ENCODE measurements at regions of chr1 and their contacts with region 1.

Region 1: GRCh38 chr1:77978969-77979876 is at the start of gene FUBP1:
- DNase-seq: peak; percentile 75 to 98 (median 96)
- ATAC-seq: peak; percentile 80 to 81
- H3K4me3 Mint-ChIP-seq: no peak within 1 kb of the TSS
- H3K27ac Mint-ChIP-seq: no peak within 1 kb of the TSS
- H3K4me1 Mint-ChIP-seq: peaks cover 18 to 52% (median 46%) of the 10 kb centered on the region in 4 donors
- H3K27me3 Mint-ChIP-seq: no peaks in the 10 kb centered on the region
- polyA plus RNA-seq, gene FUBP1: 47.8 to 54.5 (median 49.0) TPM

Region 2: DNA sequence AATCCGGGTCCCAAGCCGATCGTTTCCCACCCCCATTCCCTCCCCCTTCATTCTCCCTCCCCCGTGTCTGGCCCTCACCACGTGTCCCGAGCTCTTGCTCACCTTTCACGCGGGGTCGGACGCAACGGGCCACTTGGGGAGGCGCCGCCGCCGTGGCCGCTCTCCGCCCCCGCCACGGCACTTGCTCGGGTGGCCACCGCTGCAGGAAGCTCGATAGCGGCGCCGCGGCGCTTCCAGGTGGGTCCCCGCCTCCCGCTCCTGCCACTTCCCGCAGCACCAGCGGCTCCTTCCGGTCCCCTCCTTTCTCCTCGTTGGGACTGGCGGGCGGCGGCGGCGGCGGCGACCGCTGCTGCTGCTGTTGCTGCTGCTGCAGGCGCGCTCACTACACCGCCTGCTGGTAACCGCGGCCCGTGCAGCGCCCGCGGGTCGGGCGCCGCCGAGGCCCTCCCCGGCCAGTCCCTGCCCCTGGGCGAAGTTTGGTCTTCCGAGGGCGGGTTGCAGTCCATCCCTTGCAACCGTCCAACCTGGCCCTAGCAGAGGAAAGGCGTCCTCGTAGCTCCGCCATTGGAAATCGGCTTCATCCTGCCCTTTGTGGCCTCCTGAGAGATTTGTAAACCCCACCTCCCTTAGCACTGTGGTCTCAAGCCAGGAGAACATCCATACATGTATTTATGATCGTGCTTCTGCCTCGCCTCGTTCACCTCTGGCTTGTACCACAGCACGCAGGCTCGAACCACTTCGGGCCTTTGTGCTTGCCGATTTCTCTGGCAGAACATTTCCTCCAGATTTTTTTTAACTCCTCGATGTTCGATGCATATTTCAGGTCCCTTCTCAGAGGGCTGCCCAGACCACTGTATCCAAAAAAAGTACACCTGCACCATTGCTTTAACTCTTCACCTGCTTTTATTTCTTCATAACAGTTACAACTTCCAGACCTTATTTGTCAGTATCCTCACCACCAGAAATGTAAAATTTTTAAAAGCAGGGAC is 295.8 kb before region 1 on chr1:
- POLR2A ChIA-PET with region 1: interaction called, 28 read pairs
- DNase-seq: peak; percentile 88 to 95 (median 92)
- ATAC-seq: peak; percentile 72 to 74
- H3K4me3 Mint-ChIP-seq: peak overlapping the region; percentile 86 to 95 (median 90)
- H3K27ac Mint-ChIP-seq: peak overlapping the region; percentile 93 to 99 (median 97)
- H3K4me1 Mint-ChIP-seq: peaks cover 16 to 46% (median 40%) of the 10 kb centered on the region in 4 donors
- H3K27me3 Mint-ChIP-seq: no peaks in the 10 kb centered on the region

Region 3: GRCh38 chr1:78004719-78005447 is 25.7 kb after region 1 on chr1 and contains the start of gene DNAJB4:
- POLR2A ChIA-PET with region 1: interaction called, 104 read pairs
- DNase-seq: peak; percentile 20 to 91 (median 74)
- ATAC-seq: peak; percentile 97 to 99
- H3K4me3 Mint-ChIP-seq: peak within 1 kb of the TSS; percentile 88 to 98 (median 93)
- H3K27ac Mint-ChIP-seq: peak within 1 kb of the TSS; percentile 97 to 100 (median 99)
- H3K4me1 Mint-ChIP-seq: peaks cover 15 to 50% (median 38%) of the 10 kb centered on the region in 4 donors
- H3K27me3 Mint-ChIP-seq: peaks cover 0 to 2% (median 0%) of the 10 kb centered on the region in 5 donors
- polyA plus RNA-seq, gene DNAJB4: 3.7 to 6.3 (median 5.8) TPM

Region 4: GRCh38 chr1:78038491-78038939 is 59.3 kb after region 1 on chr1:
- POLR2A ChIA-PET with region 1: no interaction called
- DNase-seq: no peak
- ATAC-seq: no peak
- H3K4me3 Mint-ChIP-seq: no peak overlapping the region
- H3K27ac Mint-ChIP-seq: no peak overlapping the region
- H3K4me1 Mint-ChIP-seq: peaks cover 4 to 11% (median 7%) of the 10 kb centered on the region in 4 donors
- H3K27me3 Mint-ChIP-seq: peaks cover 0 to 22% (median 9%) of the 10 kb centered on the region in 5 donors

Region 5: DNA sequence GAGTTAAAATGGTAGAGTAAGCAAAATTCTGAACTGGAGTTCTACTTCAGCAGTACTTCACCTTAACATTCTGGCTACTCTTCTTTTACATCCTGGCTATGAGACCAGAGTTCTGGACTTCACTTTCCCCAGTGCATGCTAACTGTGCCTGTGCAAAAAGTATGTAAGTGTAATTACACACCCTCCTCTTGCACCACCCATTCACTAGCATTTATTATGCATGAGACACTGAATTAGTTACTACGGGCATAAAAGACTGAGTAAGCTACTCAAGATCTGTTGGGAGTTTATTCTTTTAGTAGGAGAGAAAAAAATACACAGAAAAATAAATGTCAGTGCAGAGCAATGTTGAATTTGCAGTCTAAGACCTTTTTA is 153.7 kb after region 1 on chr1:
- POLR2A ChIA-PET with region 1: no interaction called
- DNase-seq: no peak
- ATAC-seq: no peak
- H3K4me3 Mint-ChIP-seq: no peak overlapping the region
- H3K27ac Mint-ChIP-seq: no peak overlapping the region
- H3K4me1 Mint-ChIP-seq: no peaks in the 10 kb centered on the region
- H3K27me3 Mint-ChIP-seq: no peaks in the 10 kb centered on the region

Measured in naive thymus-derived CD8-positive, alpha-beta T cell (primary cell).